Activated CD8-positive, alpha-beta memory T cell treated with anti-CD3 and anti-CD28 coated beads, Interleukin-2, amount 10 ng/mL, durations not matched to agents 7 days and 5 days (primary cell): ENCODE measurements at regions of chr9 and their contacts with region 1.

Region 1: DNA sequence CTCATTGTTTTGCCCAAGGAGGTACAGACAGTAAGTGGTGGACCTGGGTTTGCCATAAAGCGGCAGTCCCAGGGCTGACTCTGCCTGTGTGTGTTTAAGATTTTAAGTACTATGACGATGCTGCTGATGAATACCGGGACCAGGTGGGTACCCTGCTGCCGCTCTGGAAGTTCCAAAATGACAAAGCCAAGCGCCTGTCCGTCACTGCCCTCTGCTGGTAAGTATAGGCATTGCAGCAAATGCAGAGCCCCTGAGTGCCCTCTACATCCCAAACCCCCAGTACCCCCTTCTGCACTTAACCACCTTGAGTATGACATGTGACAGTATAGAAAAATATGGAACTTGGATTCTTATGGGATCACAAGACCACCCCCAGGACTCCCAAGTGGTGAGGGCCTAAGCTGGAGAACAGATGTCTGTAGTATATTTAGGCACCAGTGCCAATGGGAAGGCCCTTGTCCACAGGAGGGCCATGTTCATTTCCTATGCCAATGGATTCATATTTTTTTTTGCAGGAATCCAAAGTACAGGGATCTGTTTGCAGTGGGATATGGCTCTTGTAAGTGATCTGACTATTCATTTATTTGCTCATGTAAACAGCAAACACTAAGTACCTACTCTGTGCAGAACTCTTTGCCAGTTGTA is 22.0 kb downstream of the ENHO start:
- DNase-seq: peak; percentile 83
- ATAC-seq: peak; percentile 89
- H3K4me3 Mint-ChIP-seq: no peak overlapping the region
- H3K27ac Mint-ChIP-seq: no peak overlapping the region
- H3K4me1 Mint-ChIP-seq: peaks cover 16% of the 10 kb centered on the region
- H3K27me3 Mint-ChIP-seq: peaks cover 23% of the 10 kb centered on the region

Region 2: DNA sequence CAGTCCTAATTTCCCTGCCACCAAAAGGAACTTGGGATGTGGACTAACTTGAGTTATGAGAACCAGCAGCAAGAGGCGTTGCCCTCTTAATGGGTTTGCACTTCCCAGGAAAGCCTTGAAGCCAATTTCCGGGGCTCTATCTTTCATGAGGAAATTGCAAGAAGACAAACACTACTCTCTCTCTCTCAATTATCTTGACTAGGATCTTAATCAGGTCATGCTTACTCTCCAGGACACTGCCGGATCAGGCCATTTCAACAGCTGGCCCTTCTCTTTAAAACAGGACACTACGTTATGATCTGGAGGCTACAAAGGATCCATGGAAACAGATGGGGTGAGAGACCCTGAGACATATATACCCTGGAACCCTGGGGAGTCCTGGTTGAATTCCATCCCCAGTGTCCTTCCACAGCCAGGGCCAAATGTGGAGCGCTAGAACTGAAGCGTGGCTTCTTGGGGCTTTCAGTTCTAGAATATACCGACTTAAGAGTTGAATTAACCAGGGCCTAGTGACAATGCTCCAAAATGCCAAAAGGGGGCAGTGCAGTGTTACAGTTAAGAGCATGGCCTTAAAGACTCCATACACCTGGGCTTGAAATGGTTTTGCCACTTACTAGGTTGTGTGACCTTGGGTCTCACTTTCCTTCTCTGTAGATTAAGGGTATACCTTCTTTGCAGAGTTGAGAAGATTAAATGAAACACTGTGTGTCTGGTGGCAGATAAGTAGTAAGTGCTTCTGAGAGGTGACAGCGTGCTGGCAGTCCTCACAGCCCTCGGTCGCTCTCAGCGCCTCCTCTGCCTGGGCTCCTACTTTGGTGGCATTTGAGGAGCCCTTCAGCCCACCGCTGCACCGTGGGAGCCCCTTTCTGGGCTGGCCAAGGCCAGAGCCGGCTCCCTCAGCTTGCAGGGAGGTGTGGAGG is 63.5 kb before region 1 on chr9:
- CTCF ChIA-PET with region 1: interaction called, 13 read pairs
- DNase-seq: peak; percentile 78
- ATAC-seq: peak; percentile 92
- H3K4me3 Mint-ChIP-seq: no peak overlapping the region
- H3K27ac Mint-ChIP-seq: no peak overlapping the region
- H3K4me1 Mint-ChIP-seq: peaks cover 7% of the 10 kb centered on the region
- H3K27me3 Mint-ChIP-seq: no peaks in the 10 kb centered on the region